Motor neuron (in vitro differentiated cells): ENCODE measurements at regions of chr10 and their contacts with region 1.

Region 1: DNA sequence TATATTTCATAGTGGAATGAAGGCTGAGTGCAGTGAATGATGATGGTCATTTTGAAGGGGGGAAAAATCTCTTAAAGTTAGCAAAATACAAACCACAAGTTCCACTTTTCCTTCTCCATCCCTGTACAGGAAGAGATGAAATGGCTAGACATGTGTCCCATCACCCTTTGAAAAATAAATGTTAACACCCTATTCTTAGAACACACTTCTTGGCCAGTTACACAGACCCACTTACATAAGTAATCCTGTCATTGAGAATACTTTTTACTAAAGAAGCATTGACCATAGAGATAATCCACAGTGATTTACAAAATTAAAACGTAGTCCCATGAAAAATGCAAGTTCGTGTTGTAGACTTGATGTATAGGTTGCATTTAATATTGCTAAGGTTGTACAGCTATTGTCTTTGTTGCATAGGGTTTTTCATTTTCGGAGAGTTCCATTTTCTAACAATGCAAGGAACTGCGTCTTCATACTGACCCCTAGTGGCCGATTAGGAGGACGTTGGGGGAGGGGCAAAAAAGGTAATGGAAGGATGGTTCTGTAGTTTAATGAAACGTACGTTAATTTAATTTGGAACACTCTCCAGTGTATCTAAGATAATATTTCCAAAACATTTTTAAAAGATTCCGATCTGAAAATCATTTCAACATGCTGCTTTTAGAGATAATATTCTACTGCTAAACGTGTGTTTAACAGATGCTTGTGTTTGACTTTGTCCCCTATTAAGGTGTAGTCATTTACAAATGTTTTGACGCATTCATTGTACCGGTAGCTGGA is 60.9 kb downstream of the ARMC3 start:
- ATAC-seq: peak; percentile 39 to 71 (median 53)
- H3K4me3 ChIP-seq: no peak overlapping the region
- H3K27ac ChIP-seq: no peak overlapping the region
- H3K4me1 ChIP-seq: peaks cover 4 to 12% of the 10 kb centered on the region in 2 donors

Region 2: GRCh38 chr10:21495752-21496342 is 1492.9 kb before region 1 on chr10:
- in situ Hi-C with region 1: loop called in 1 of 9 experiments (anchors 25 kb)
- ATAC-seq: peak; percentile 68 to 84 (median 75)
- H3K4me3 ChIP-seq: peak overlapping the region; percentile 66 to 80 (median 79)
- H3K27ac ChIP-seq: peak overlapping the region; percentile 92 to 94
- H3K4me1 ChIP-seq: peaks cover 12 to 17% of the 10 kb centered on the region in 2 donors

Region 3: GRCh38 chr10:21989453-21990154 is 999.2 kb before region 1 on chr10:
- in situ Hi-C with region 1: loop called in 2 of 9 experiments (anchors 25 kb)
- ATAC-seq: peak; percentile 79 to 99 (median 92)
- H3K4me3 ChIP-seq: no peak overlapping the region
- H3K27ac ChIP-seq: no peak overlapping the region
- H3K4me1 ChIP-seq: no peaks in the 10 kb centered on the region

Region 4: GRCh38 chr10:22003079-22003913 is 985.5 kb before region 1 on chr10 and contains the start of gene DNAJC1:
- in situ Hi-C with region 1: loop called in 3 of 9 experiments (anchors 10 to 25 kb)
- ATAC-seq: peak; percentile 92 to 98 (median 98)
- H3K4me3 ChIP-seq: peak within 1 kb of the TSS; percentile 51 to 75 (median 58)
- H3K27ac ChIP-seq: peak within 1 kb of the TSS; percentile 89
- H3K4me1 ChIP-seq: peaks cover 11 to 12% of the 10 kb centered on the region in 2 donors
- total RNA-seq, gene DNAJC1: 13.6 to 46.2 (median 28.3) TPM

Region 5: GRCh38 chr10:22597138-22597537 is 391.6 kb before region 1 on chr10:
- in situ Hi-C with region 1: loop called in 1 of 9 experiments (anchors 25 kb)
- ATAC-seq: peak in 4 of 8 experiments; percentile 21 to 60 (median 46)
- H3K4me3 ChIP-seq: no peak overlapping the region
- H3K27ac ChIP-seq: no peak overlapping the region
- H3K4me1 ChIP-seq: peaks cover 14 to 15% of the 10 kb centered on the region in 2 donors

Region 6: GRCh38 chr10:22805283-22805682 is 183.5 kb before region 1 on chr10:
- in situ Hi-C with region 1: no loop called
- ATAC-seq: peak in 7 of 8 experiments; percentile 24 to 79 (median 50)
- H3K4me3 ChIP-seq: no peak overlapping the region
- H3K27ac ChIP-seq: no peak overlapping the region
- H3K4me1 ChIP-seq: peaks cover 4 to 5% of the 10 kb centered on the region in 2 donors